Activated naive CD4-positive, alpha-beta T cell treated with anti-CD3 and anti-CD28 coated beads for 36 hours (primary cell): ENCODE measurements at regions of chr2 and their contacts with region 1.

Region 1: DNA sequence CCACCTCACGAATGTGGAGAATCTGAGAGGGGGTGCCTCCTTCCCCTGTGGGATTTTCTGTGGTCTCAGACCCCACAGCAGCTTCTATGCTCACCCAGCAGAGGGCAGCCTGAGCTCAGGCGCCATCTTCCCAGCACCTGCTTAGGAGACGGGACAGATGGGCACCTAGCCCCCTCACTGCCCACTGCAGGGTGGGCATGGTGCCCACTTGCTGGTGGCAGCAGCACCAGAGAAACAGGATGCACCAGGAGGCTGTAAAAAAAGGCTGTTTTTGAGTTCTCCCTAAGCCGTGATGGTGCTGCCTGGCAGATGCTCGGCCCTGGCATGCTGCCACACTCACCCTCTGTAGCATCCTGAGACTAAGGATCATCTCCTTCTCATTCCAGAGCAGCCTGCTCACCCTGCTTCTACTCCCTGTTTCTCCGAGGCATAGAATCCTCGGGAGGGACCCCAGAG is 19.1 kb upstream of the SLC20A1 start:
- DNase-seq: peak; percentile 77
- H3K4me3 Mint-ChIP-seq: peak overlapping the region; percentile 47
- H3K27ac Mint-ChIP-seq: peak overlapping the region; percentile 76
- H3K4me1 Mint-ChIP-seq: peaks cover 63% of the 10 kb centered on the region
- H3K27me3 Mint-ChIP-seq: no peaks in the 10 kb centered on the region

Region 2: GRCh38 chr2:112606488-112606902 is 20.1 kb before region 1 on chr2:
- CTCF ChIA-PET with region 1: interaction called, 14 read pairs
- intact Hi-C with region 1: no loop called
- DNase-seq: no peak
- H3K4me3 Mint-ChIP-seq: no peak overlapping the region
- H3K27ac Mint-ChIP-seq: no peak overlapping the region
- H3K4me1 Mint-ChIP-seq: no peaks in the 10 kb centered on the region
- H3K27me3 Mint-ChIP-seq: no peaks in the 10 kb centered on the region

Region 3: DNA sequence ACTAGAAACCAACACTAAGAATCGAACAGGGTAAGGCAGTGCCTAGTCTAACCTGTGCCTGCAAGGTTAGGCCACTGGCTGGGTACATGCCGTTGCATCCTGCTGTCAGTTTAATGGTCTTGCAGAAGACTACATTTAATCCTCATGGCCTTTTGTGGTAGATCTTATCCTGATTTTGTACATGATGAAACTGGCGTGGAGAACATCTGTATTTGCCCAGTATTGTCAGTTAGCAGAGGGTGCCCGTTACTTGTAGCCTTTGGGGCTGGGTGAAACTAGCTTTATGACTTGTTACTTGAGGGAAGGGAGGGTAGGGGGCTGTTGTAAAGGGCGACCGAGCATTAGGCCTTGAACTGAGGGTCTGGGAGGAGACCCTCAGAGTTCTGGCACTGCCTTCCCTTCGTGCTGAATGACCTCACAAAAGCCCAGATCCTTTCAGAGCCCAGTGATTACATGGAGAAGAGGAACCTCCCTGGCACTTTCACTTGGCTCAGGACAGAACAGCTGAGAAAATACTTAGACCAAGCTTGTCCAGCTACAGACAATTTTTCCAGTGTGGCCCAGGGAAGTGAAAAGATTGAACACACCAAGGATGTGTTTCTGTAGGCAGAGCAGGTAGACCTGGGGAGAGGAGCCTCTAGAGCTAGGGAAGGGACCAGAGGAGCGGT is 38.6 kb after region 1 on chr2:
- CTCF ChIA-PET with region 1: interaction called, 13 read pairs
- intact Hi-C with region 1: no loop called
- DNase-seq: no peak
- H3K4me3 Mint-ChIP-seq: no peak overlapping the region
- H3K27ac Mint-ChIP-seq: no peak overlapping the region
- H3K4me1 Mint-ChIP-seq: peaks cover 7% of the 10 kb centered on the region
- H3K27me3 Mint-ChIP-seq: no peaks in the 10 kb centered on the region